Heart left ventricle (tissue), 16 donors: ENCODE measurements at regions of chr10 and their contacts with region 1.

Region 1: GRCh38 chr10:16030562-16030961 is 170.3 kb upstream of the MINDY3 start:
- DNase-seq: no peak
- ATAC-seq: no peak
- H3K4me3 ChIP-seq: no peak overlapping the region
- H3K27ac ChIP-seq: no peak overlapping the region
- H3K4me1 ChIP-seq: no peaks in the 10 kb centered on the region
- H3K27me3 ChIP-seq: no peaks in the 10 kb centered on the region
- CTCF ChIP-seq: no peak
- POLR2A ChIP-seq: no peak

Region 2: DNA sequence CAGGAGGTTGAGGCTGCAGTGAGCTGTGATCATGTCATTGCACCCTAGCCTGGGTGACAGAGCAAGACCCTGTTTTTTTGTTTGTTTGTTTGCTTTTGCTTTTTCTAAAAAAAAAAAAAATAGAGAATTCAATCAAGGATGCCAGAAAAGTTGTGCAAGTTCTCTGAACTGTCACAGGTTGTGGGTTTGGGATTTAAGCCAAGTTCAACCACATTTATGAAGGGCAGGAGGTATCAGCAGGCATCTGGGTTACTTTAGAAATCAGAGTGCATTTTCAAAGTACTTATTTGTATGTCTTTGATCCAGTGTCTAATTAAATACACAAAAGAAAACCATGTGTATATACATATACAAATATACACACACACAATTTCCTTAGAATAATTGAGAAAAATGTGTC is 19.0 kb before region 1 on chr10:
- intact Hi-C with region 1: loop called in 1 of 10 experiments (anchors 2 kb)
- DNase-seq: no peak
- ATAC-seq: no peak
- H3K4me3 ChIP-seq: no peak overlapping the region
- H3K27ac ChIP-seq: no peak overlapping the region
- H3K4me1 ChIP-seq: no peaks in the 10 kb centered on the region
- H3K27me3 ChIP-seq: no peaks in the 10 kb centered on the region
- CTCF ChIP-seq: no peak
- POLR2A ChIP-seq: no peak